ENCODE measurements at regions of chr19 and their contacts with region 1.

Region 1: GRCh38 chr19:49497047-49497788 is 984 bp downstream of the RPS11 start:
- DNase-seq: peak; percentile 86
- H3K4me3 ChIP-seq: peak overlapping the region; percentile 98
- H3K27ac ChIP-seq: peak overlapping the region; percentile 84
- H3K4me1 ChIP-seq: peaks cover 70% of the 10 kb centered on the region
- CTCF ChIP-seq: no peak

Region 2: GRCh38 chr19:48637170-48637947 is 859.9 kb before region 1 on chr19 and contains the start of gene DBP:
- CTCF ChIA-PET with region 1: no interaction called
- POLR2A ChIA-PET with region 1: no interaction called
- intact Hi-C with region 1: loop called (anchors 10 kb)
- DNase-seq: peak; percentile 100
- H3K4me3 ChIP-seq: peak within 1 kb of the TSS; percentile 76
- H3K27ac ChIP-seq: peak within 1 kb of the TSS; percentile 94
- H3K4me1 ChIP-seq: peaks cover 46% of the 10 kb centered on the region
- CTCF ChIP-seq: no peak
- total RNA-seq, gene DBP: 20.8 and 35.6 TPM in 2 replicates

Region 3: DNA sequence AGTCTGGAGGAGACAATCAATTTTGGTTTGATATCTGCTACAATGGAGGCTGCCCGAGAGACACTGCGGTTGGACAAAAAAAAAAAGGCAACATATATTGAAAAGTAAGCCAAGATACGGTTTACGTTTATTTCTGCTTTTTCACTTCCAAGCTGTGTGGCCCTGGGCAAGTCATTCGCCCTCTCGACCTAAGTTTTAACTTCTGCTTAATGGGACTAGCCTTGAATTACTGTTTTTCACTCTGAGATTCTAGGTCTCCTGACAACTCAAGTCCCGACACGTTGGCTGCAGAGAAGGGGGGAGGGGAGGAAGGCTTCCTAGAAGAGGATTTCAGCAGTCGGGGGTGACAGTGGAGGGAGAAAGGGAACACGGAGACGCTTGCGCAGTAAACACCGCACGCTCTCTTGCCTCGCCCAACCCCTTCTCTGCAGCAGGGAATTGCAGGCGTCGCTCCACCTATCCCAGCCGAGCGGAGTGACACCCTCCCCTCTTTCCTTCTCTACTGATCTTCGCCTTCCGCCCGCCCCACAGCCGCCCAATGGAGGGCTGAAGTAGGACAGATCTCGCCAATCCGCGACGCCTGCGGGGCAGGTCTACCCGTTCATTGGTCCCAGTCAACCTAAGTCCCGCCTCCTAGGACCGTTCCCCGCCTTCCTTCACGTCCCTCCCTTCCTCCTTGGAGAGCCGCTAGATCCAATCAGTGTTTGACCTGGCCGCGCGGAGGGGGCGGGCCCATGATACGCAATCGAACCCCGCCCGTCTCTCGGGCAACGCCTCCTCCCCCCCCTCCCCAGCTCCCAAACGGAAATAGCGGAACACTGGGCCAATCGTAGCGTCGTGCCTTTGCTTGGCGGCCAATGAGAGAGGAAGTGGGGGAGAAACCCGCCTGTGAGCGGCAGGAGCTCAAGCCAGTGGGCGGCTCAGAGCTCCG is 269.1 kb after region 1 on chr19:
- CTCF ChIA-PET with region 1: no interaction called
- POLR2A ChIA-PET with region 1: no interaction called
- intact Hi-C with region 1: loop called (anchors 10 kb)
- DNase-seq: peak; percentile 100
- H3K4me3 ChIP-seq: peak overlapping the region; percentile 98
- H3K27ac ChIP-seq: peak overlapping the region; percentile 74
- H3K4me1 ChIP-seq: peaks cover 17% of the 10 kb centered on the region
- CTCF ChIP-seq: no peak

Region 4: GRCh38 chr19:49843265-49843664 is 346.0 kb after region 1 on chr19:
- CTCF ChIA-PET with region 1: no interaction called
- POLR2A ChIA-PET with region 1: no interaction called
- intact Hi-C with region 1: no loop called
- DNase-seq: peak; percentile 45
- H3K4me3 ChIP-seq: no peak overlapping the region
- H3K27ac ChIP-seq: no peak overlapping the region
- H3K4me1 ChIP-seq: peaks cover 12% of the 10 kb centered on the region
- CTCF ChIP-seq: no peak

Measured in OCI-LY7 (cell line).